K562 (cell line): ENCODE measurements at regions of chr3 and their contacts with region 1.

Region 1: GRCh38 chr3:179147873-179148615 is at the start of gene PIK3CA:
- DNase-seq: peak; percentile 90 to 98 (median 92)
- ATAC-seq: peak; percentile 90
- H3K4me3 ChIP-seq: peak within 1 kb of the TSS; percentile 95
- H3K27ac ChIP-seq: peak within 1 kb of the TSS; percentile 90
- H3K4me1 ChIP-seq: peaks cover 5 to 14% of the 10 kb centered on the region in 2 experiments; a peak in 3 of 5 replicates
- H3K27me3 ChIP-seq: no peaks in the 10 kb centered on the region
- CTCF ChIP-seq: no peak
- EP300 ChIP-seq: no peak; the same call in none of the 2 replicates
- POLR2A ChIP-seq: peak; percentile 81
- RAD21 ChIP-seq: no peak
- polyA plus RNA-seq, gene PIK3CA: 3.8 to 4.8 TPM

Region 2: GRCh38 chr3:179015551-179016020 is 132.5 kb before region 1 on chr3:
- CTCF ChIA-PET with region 1: no interaction called
- POLR2A ChIA-PET with region 1: no interaction called
- in situ Hi-C with region 1: no loop called
- intact Hi-C with region 1: loop called (anchors 1 kb)
- DNase-seq: peak; percentile 56 to 87 (median 64)
- ATAC-seq: peak; percentile 92
- H3K4me3 ChIP-seq: no peak overlapping the region
- H3K27ac ChIP-seq: no peak overlapping the region
- H3K4me1 ChIP-seq: peaks cover 0 to 6% of the 10 kb centered on the region in 2 experiments; a peak in 2 of 5 replicates
- H3K27me3 ChIP-seq: no peaks in the 10 kb centered on the region
- CTCF ChIP-seq: peak; percentile 80 to 91 (median 85)
- EP300 ChIP-seq: no peak
- POLR2A ChIP-seq: no peak
- RAD21 ChIP-seq: peak; percentile 96 to 97

Region 3: DNA sequence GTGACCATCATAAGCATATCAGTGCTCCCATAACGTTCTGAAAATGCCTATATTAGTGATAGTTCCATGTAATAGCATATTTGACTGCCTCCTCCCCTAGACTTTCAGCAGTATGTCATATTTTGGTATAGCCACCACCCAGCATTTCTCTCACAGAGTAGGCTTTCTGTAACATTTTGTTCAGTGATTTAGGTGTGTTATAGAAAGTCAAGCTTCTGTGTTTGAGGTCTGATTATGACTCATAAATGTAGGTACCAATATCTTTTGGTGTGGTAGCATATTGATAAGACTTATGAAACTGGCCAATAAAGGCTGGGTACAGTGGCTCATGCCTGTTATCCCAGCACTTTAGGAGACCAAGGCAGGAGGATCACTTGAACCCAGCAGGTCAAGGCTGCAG is 42.2 kb before region 1 on chr3:
- CTCF ChIA-PET with region 1: no interaction called
- POLR2A ChIA-PET with region 1: no interaction called
- in situ Hi-C with region 1: no loop called
- intact Hi-C with region 1: loop called (anchors 1 kb)
- DNase-seq: no peak
- ATAC-seq: no peak
- H3K4me3 ChIP-seq: no peak overlapping the region
- H3K27ac ChIP-seq: no peak overlapping the region
- H3K4me1 ChIP-seq: peaks cover 0 to under 1% of the 10 kb centered on the region in 2 experiments; a peak in 2 of 5 replicates
- H3K27me3 ChIP-seq: no peaks in the 10 kb centered on the region
- CTCF ChIP-seq: no peak
- EP300 ChIP-seq: no peak
- POLR2A ChIP-seq: no peak
- RAD21 ChIP-seq: no peak

Region 4: GRCh38 chr3:179260949-179261765 is 113.1 kb after region 1 on chr3:
- CTCF ChIA-PET with region 1: no interaction called
- POLR2A ChIA-PET with region 1: no interaction called
- in situ Hi-C with region 1: no loop called
- intact Hi-C with region 1: loop called (anchors 2 kb)
- DNase-seq: peak; percentile 90 to 93 (median 92)
- ATAC-seq: peak; percentile 87
- H3K4me3 ChIP-seq: peak overlapping the region; percentile 63
- H3K27ac ChIP-seq: peak overlapping the region; percentile 89
- H3K4me1 ChIP-seq: peaks cover 24 to 25% of the 10 kb centered on the region in 2 experiments; a peak in 4 of 5 replicates
- H3K27me3 ChIP-seq: no peaks in the 10 kb centered on the region
- CTCF ChIP-seq: no peak
- EP300 ChIP-seq: no peak
- POLR2A ChIP-seq: peak; percentile 69; the same call in 1 of the 2 replicates
- RAD21 ChIP-seq: 0 out of 4 replicates have a peak, but pooled peaks of 1 of the 2 experiments have one; percentile 1

Region 5: GRCh38 chr3:179299999-179300613 is 152.1 kb after region 1 on chr3:
- CTCF ChIA-PET with region 1: no interaction called
- POLR2A ChIA-PET with region 1: interaction called, 3 read pairs
- in situ Hi-C with region 1: no loop called
- intact Hi-C with region 1: loop called (anchors 5 kb)
- DNase-seq: peak in 1 of 4 experiments; percentile 8
- ATAC-seq: no peak
- H3K4me3 ChIP-seq: no peak overlapping the region
- H3K27ac ChIP-seq: peak overlapping the region; percentile 16; the same call in 2 of the 3 replicates
- H3K4me1 ChIP-seq: peaks cover 9 to 16% of the 10 kb centered on the region in 2 experiments; a peak in 3 of 5 replicates
- H3K27me3 ChIP-seq: no peaks in the 10 kb centered on the region
- CTCF ChIP-seq: no peak
- EP300 ChIP-seq: no peak
- POLR2A ChIP-seq: no peak
- RAD21 ChIP-seq: no peak